ENCODE measurements at regions of chr3 and their contacts with region 1.

Region 1: GRCh38 chr3:128804017-128804810 is 75.2 kb upstream of the ACAD9 start:
- DNase-seq: no peak
- ATAC-seq: peak; percentile 16 to 48
- H3K4me3 ChIP-seq: peak overlapping the region; percentile 11 to 38 (median 36)
- H3K27ac ChIP-seq: peak overlapping the region; percentile 94 to 99 (median 96)
- H3K4me1 ChIP-seq: peaks cover 90 to 96% of the 10 kb centered on the region in 2 donors
- H3K27me3 ChIP-seq: no peaks in the 10 kb centered on the region
- CTCF ChIP-seq: no peak
- POLR2A ChIP-seq: no peak

Region 2: GRCh38 chr3:128369864-128370642 is 434.2 kb before region 1 on chr3:
- in situ Hi-C with region 1: no loop called
- intact Hi-C with region 1: loop called (anchors 10 kb)
- DNase-seq: no peak
- ATAC-seq: peak; percentile 28 to 38
- H3K4me3 ChIP-seq: no peak overlapping the region
- H3K27ac ChIP-seq: peak overlapping the region; percentile 65 to 85 (median 74)
- H3K4me1 ChIP-seq: peaks cover 80 to 87% of the 10 kb centered on the region in 2 donors
- H3K27me3 ChIP-seq: no peaks in the 10 kb centered on the region
- CTCF ChIP-seq: no peak
- POLR2A ChIP-seq: no peak

Region 3: GRCh38 chr3:128590948-128591347 is 213.3 kb before region 1 on chr3:
- in situ Hi-C with region 1: no loop called
- intact Hi-C with region 1: no loop called
- DNase-seq: no peak
- ATAC-seq: no peak
- H3K4me3 ChIP-seq: no peak overlapping the region
- H3K27ac ChIP-seq: no peak overlapping the region
- H3K4me1 ChIP-seq: no peaks in the 10 kb centered on the region
- H3K27me3 ChIP-seq: peaks cover 0 to 4% (median 0%) of the 10 kb centered on the region in 3 donors
- CTCF ChIP-seq: no peak
- POLR2A ChIP-seq: no peak

Region 4: DNA sequence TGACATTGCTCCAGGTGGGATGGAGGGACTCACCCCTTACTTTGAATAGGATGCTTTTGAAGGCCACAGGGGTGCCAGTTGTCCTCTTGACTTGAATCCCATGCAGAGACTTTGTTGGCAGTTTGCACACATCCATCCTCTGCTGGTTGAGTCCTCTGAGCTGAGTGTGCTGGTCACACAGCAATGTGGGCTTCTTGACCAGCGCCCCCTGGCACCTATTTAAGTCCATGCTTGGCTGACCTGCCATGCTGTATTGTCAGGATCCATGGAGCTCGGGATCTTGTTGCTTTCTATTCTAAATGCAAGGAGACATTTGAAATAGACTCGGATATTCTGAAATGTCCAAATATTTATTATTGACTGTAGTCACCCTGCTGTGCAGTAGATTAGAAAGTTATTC is 58.5 kb before region 1 on chr3:
- in situ Hi-C with region 1: no loop called
- intact Hi-C with region 1: no loop called
- DNase-seq: no peak
- ATAC-seq: no peak
- H3K4me3 ChIP-seq: no peak overlapping the region
- H3K27ac ChIP-seq: no peak overlapping the region
- H3K4me1 ChIP-seq: peaks cover 46 to 55% of the 10 kb centered on the region in 2 donors
- H3K27me3 ChIP-seq: no peaks in the 10 kb centered on the region
- CTCF ChIP-seq: no peak
- POLR2A ChIP-seq: no peak

Region 5: GRCh38 chr3:128863560-128863959 is 59.3 kb after region 1 on chr3:
- in situ Hi-C with region 1: no loop called
- intact Hi-C with region 1: no loop called
- DNase-seq: no peak
- ATAC-seq: peak in 1 of 2 donors; percentile 28
- H3K4me3 ChIP-seq: no peak overlapping the region
- H3K27ac ChIP-seq: no peak overlapping the region
- H3K4me1 ChIP-seq: peaks cover 8 to 9% of the 10 kb centered on the region in 2 donors
- H3K27me3 ChIP-seq: no peaks in the 10 kb centered on the region
- CTCF ChIP-seq: peak in 4 of 5 experiments; percentile 12 to 43 (median 26)
- POLR2A ChIP-seq: no peak

Region 6: DNA sequence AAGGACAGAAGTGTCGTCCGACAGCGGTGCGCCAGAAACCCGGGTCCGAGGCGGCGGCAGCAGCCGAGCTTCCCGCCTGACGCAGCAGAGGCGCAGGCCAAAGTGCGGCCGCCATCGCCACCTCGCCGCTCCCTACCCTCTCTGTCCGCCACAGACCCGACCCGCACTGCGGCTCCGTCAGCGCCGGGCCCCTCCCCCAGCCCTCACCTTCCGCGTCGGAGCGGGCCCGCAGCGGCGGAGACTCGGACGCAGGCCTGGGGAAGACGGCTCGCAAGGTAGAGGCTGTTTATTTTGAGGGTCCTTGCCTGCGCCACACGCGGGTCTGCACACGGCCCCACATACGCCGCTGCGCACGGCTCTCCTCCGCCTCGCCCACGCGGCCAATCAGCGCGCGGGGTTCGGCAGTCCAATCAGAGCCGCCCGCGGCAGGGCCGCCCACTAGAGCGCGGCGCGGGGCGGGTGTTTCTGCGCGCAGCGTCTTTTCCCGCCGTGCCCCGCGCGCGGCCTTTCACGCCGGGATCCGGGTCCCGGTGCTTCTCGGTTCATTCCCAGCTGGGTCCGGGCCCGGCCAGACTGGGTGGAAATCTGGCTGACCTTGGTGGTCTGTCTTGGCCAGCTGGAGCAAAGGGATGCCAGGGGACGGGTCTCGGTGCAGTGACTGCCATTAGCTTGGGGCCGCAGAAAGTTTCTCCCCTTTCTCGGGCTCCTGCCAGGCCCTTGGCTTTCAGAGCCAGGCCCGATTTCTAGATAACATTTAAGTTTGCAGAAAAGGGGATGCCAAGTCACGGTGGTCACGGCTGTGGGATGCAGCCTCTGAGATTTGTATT is 379.6 kb after region 1 on chr3 and contains the start of gene CNBP:
- in situ Hi-C with region 1: no loop called
- intact Hi-C with region 1: loop called (anchors 5 kb)
- DNase-seq: peak; percentile 92 to 94
- ATAC-seq: peak; percentile 64 to 68
- H3K4me3 ChIP-seq: peak within 1 kb of the TSS; percentile 85 to 97 (median 95)
- H3K27ac ChIP-seq: peak within 1 kb of the TSS; percentile 96 to 100 (median 100)
- H3K4me1 ChIP-seq: peaks cover 44 to 52% of the 10 kb centered on the region in 2 donors
- H3K27me3 ChIP-seq: no peaks in the 10 kb centered on the region
- CTCF ChIP-seq: no peak
- POLR2A ChIP-seq: peak; percentile 99 to 100
- total RNA-seq, gene CNBP: 784 to 1,263 (median 979) TPM